B cell (primary cell): ENCODE measurements at regions of chr1 and their contacts with region 1.

Region 1: GRCh38 chr1:92784639-92785500 is at the start of gene EVI5:
- DNase-seq: peak; percentile 95
- ATAC-seq: peak; percentile 89
- H3K4me3 ChIP-seq: peak within 1 kb of the TSS; percentile 54 to 87 (median 71)
- H3K4me3 Mint-ChIP-seq: peak within 1 kb of the TSS; percentile 94
- H3K27ac ChIP-seq: peak within 1 kb of the TSS; percentile 80 to 94
- H3K27ac Mint-ChIP-seq: peak within 1 kb of the TSS; percentile 95
- H3K4me1 ChIP-seq: peaks cover 7 to 17% of the 10 kb centered on the region in 2 donors
- H3K4me1 Mint-ChIP-seq: peaks cover 26% of the 10 kb centered on the region
- H3K27me3 ChIP-seq: no peaks in the 10 kb centered on the region
- H3K27me3 Mint-ChIP-seq: no peaks in the 10 kb centered on the region
- CTCF ChIP-seq: no peak
- total RNA-seq, gene EVI5: 35.4 and 36.3 TPM in 2 replicates

Region 2: DNA sequence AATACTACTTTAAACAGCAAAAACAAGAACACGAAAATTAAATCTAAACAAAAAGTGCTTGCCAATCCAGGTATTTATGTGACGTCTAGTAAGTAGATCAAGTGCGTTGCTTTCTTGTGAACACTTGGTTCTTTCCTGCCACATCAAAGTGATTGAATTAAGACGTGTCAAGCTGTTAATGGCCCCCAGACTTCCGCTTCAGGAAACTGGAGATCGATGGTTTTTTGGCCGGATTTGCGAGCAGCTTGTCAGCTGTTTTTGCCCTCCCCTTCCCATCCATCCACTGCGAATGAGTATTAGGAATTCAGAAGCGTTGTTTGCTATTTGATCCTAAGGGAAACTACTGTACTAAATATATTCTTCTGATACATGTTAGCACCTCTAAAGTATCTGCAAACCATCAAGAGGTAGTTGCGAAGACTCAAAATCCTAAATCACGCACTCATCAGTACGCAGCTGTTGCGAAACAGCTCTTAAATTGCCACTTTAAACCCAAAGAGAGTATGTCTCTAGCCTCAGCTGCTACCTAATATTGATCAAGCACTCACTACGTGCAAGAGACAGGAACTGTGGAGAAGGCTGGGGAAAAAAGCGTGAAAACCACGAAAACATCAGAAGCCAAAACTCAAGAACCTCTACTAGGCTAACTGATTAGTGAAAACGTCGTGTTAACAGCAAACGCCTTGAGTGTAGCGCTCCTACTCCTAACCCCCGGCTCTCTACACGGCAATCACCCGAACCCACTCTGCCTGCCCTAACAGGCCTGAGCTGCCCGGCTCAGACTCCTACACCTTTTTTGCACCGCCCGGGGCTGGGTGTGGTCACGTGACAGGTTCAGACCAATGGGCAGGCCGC is 836.1 kb before region 1 on chr1:
- CTCF ChIA-PET with region 1: no interaction called
- POLR2A ChIA-PET with region 1: no interaction called
- intact Hi-C with region 1: no loop called
- DNase-seq: no peak
- ATAC-seq: no peak
- H3K4me3 ChIP-seq: no peak overlapping the region
- H3K4me3 Mint-ChIP-seq: no peak overlapping the region
- H3K27ac ChIP-seq: no peak overlapping the region
- H3K27ac Mint-ChIP-seq: no peak overlapping the region
- H3K4me1 ChIP-seq: no peaks in the 10 kb centered on the region
- H3K4me1 Mint-ChIP-seq: no peaks in the 10 kb centered on the region
- H3K27me3 ChIP-seq: no peaks in the 10 kb centered on the region
- H3K27me3 Mint-ChIP-seq: peaks cover 12% of the 10 kb centered on the region
- CTCF ChIP-seq: no peak

Region 3: GRCh38 chr1:92804721-92805169 is 19.9 kb after region 1 on chr1:
- CTCF ChIA-PET with region 1: interaction called, 5 read pairs
- POLR2A ChIA-PET with region 1: no interaction called
- intact Hi-C with region 1: loop called (anchors 2 kb)
- DNase-seq: peak; percentile 65
- ATAC-seq: peak; percentile 87
- H3K4me3 ChIP-seq: no peak overlapping the region
- H3K4me3 Mint-ChIP-seq: peak overlapping the region; percentile 48
- H3K27ac ChIP-seq: peak overlapping the region; percentile 42 to 57
- H3K27ac Mint-ChIP-seq: peak overlapping the region; percentile 84
- H3K4me1 ChIP-seq: peaks cover 7 to 9% of the 10 kb centered on the region in 2 donors
- H3K4me1 Mint-ChIP-seq: peaks cover 15% of the 10 kb centered on the region
- H3K27me3 ChIP-seq: no peaks in the 10 kb centered on the region
- H3K27me3 Mint-ChIP-seq: no peaks in the 10 kb centered on the region
- CTCF ChIP-seq: no peak

Region 4: DNA sequence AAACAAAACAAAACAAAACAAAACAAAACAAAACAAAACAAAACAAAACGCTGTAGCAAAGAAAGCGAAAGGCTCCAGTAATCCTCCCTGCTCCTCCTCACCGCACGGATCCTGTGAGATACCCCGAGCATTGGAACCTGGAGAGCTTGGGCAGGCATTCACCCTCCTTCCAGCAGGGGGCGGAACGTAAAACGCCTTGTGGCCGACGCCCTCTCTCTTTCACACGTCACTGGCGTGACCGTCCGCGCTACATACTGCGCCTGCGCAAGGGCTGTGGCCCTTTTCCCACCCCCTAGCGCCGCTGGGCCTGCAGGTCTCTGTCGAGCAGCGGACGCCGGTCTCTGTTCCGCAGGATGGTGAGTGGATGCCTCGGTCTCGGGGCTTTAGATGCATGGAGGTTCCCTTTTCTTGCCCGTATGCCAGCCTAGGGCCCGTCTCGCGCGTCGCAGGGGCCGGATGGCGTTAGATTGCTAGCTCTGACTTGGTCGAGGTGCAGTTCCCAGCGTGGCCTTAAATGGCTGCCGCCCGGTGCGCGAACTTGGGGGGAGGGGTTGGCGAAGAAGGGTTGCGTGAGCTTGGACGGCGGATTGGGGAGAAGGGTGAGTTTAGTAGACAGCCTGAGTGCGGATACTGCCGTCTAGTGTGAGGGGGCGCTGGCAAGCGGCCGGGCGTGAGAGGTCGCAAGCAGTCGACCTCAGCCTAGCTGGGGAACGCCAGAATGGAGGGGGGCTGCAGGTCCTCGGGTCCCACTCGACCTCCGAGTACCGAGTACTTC is 47.1 kb after region 1 on chr1 and contains the start of gene RPL5:
- CTCF ChIA-PET with region 1: interaction called, 17 read pairs
- POLR2A ChIA-PET with region 1: interaction called, 6 read pairs
- intact Hi-C with region 1: loop called (anchors 1 kb)
- DNase-seq: peak; percentile 100
- ATAC-seq: peak; percentile 88
- H3K4me3 ChIP-seq: peak within 1 kb of the TSS; percentile 84 to 98 (median 92)
- H3K4me3 Mint-ChIP-seq: peak within 1 kb of the TSS; percentile 100
- H3K27ac ChIP-seq: peak within 1 kb of the TSS; percentile 90 to 96
- H3K27ac Mint-ChIP-seq: peak within 1 kb of the TSS; percentile 100
- H3K4me1 ChIP-seq: peaks cover 25 to 28% of the 10 kb centered on the region in 2 donors
- H3K4me1 Mint-ChIP-seq: peaks cover 47% of the 10 kb centered on the region
- H3K27me3 ChIP-seq: no peaks in the 10 kb centered on the region
- H3K27me3 Mint-ChIP-seq: no peaks in the 10 kb centered on the region
- CTCF ChIP-seq: peak; percentile 89
- total RNA-seq, gene RPL5: 1,049 and 1,104 TPM in 2 replicates